ENCODE measurements at regions of chr5 and their contacts with region 1.

Region 1: DNA sequence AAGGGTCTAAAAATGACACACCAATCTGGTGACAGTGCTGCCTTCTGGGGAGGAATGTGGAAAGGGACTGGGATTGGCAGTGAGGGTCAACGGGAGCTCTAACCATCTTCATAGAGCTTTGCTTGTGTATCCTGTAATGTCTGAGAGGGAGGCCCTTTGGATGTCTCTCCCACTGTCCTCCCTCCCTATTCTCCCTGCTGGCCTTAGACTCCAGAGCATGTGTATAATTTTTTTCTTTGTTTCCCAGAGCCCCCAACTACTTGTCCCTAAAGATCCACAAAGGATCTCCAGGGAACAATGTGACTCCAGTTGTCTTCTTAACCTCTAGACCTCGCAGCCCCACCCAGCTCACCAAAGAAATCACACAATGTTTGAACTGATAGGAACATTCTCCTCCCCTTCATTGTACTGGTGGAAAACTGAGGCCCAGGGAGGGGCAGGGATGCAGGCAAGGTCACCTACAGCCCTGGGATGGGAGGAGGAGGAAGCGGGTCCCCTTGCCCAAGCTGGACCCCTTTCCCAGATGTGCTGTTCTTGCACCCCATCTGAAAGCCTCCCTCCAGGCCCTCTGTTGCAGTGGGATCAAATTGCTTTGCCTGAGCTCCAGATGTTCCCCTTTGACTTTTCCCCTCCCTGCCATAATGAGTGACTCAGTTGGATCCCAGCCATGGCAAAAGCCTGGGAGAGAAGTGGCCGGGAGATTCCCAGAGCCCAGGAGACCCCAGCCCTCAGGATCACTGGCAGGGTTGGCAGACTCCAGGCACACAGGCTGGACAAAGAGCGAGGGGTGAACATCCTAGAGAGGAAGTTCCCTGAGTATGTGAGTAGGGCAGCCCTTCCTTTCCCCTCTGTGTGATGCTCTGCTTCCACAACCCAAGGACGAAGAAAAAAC is 21.8 kb downstream of the SPARC start:
- DNase-seq: peak; percentile 35
- H3K4me3 ChIP-seq: no peak overlapping the region
- CTCF ChIP-seq: no peak

Region 2: DNA sequence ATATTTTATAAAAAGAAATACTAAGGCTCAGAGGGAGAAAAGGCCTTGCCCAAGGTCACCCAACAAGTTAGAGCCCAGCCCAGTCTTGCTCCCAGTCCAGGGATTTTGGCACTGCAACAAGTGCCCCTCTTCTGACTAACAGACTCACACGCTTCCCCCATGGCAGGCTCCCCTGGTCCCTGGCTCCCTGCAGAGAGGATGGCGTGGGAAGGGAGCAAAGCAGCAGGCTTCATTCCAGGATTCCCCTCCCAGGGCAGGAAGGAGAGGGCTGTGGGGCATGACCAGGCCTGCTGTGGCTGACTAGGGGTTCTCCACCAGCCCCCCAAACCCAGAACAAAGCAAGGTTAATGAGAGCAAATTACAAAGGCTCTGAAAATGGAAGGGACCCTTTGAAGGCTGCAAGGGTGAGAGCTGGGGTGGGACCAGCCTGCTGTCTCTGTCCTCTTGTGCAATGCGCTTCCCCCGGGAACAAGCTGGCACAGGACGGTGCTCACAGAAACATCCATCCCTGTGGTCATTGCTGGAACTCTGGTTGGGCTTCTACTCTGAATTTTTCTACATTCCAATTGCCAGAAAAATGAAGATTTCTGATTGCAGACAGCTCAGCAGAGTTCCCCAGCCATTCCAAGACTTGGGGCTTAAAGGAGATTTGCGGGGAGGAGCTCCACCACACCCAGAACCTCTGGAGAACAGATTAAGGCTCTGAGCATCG is 36.7 kb before region 1 on chr5:
- in situ Hi-C with region 1: no loop called
- DNase-seq: no peak
- H3K4me3 ChIP-seq: no peak overlapping the region
- CTCF ChIP-seq: no peak

Region 3: GRCh38 chr5:151740336-151740942 is 75.5 kb after region 1 on chr5:
- in situ Hi-C with region 1: loop called (anchors 5 kb)
- DNase-seq: peak; percentile 88
- H3K4me3 ChIP-seq: peak overlapping the region; percentile 2
- CTCF ChIP-seq: peak; percentile 81